CD8-positive, alpha-beta T cell (primary cell): ENCODE measurements at regions of chr3 and their contacts with region 1.

Region 1: DNA sequence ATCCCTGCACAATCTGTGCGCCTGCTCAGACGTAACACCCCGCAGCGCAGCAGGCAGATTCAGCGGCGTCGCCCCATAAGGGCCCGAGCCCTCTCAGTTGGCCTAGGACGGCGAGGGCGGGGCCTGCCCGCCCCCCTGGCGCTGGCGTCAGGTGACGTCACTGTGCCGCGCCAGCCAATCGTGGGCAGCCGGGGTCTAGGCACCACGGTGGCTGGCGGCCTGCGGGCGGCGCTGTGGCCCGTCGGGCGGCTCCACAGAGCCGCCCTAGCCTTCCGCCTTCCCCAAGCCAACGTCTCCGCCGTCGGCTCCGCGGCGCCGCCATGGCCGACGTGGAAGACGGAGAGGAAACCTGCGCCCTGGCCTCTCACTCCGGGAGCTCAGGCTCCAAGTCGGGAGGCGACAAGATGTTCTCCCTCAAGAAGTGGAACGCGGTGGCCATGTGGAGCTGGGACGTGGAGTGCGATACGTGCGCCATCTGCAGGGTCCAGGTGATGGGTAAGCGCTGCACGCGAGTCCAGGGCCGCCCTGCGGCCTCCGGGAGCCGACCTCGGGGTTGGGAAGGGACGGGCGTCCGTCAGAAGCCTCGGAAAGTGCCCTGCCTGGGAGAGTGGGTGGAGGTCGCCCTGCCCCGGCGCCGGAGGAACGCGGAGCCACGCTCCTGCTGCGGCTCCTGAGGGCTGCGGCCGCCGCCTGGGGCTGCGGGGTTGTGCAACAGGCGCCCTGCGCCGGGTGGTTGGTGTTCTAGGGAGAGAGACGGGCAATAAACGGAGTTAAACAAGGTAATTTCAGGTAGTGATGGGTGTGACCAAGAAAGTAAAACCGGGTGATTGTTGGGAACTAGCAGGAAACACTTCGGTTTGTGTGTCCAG is at the start of gene RNF7:
- DNase-seq: peak; percentile 95 to 99 (median 97)
- ATAC-seq: peak; percentile 94
- H3K4me3 ChIP-seq: peak within 1 kb of the TSS; percentile 82 to 95
- H3K4me3 Mint-ChIP-seq: peak within 1 kb of the TSS; percentile 97
- H3K27ac ChIP-seq: peak within 1 kb of the TSS; percentile 82 to 90
- H3K27ac Mint-ChIP-seq: peak within 1 kb of the TSS; percentile 98
- H3K4me1 ChIP-seq: peaks cover 31% of the 10 kb centered on the region
- H3K4me1 Mint-ChIP-seq: peaks cover 36% of the 10 kb centered on the region
- H3K27me3 ChIP-seq: no peaks in the 10 kb centered on the region
- H3K27me3 Mint-ChIP-seq: no peaks in the 10 kb centered on the region
- CTCF ChIP-seq: peak; percentile 70
- total RNA-seq, gene RNF7: 82.8 to 83.9 TPM

Region 2: DNA sequence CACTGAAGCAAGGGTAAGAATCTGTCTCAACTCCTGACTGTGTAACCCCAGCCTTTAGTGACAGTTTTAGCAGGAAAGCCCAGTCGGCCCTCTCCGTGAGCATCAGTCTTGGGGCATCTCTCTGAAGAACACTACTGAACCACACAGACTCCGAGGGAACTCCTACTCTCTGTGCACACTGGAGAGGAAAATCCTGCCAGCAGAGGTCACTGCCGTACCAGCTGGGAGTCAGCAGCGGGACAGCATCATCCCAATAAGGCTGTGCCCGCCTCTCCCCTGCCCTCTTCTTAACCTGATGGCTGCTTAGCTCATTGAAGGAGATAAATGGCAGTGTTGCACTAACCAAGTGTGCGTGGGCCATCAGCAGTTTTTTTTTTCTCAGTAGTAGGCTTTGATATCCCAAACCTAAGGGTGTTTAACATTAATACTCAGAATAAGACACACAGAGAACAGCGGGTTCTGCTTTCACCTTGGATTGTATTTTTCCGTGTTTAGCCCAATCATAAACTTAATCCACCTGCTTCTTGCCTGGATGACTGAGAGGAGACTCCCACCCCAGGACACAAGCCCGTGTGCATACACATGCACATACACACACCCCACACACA is 278.1 kb before region 1 on chr3:
- CTCF ChIA-PET with region 1: interaction called, 3 read pairs
- POLR2A ChIA-PET with region 1: no interaction called
- intact Hi-C with region 1: loop called (anchors 1 to 10 kb)
- DNase-seq: peak; percentile 77 to 92 (median 88)
- ATAC-seq: peak; percentile 100
- H3K4me3 ChIP-seq: no peak overlapping the region
- H3K4me3 Mint-ChIP-seq: no peak overlapping the region
- H3K27ac ChIP-seq: no peak overlapping the region
- H3K27ac Mint-ChIP-seq: no peak overlapping the region
- H3K4me1 ChIP-seq: no peaks in the 10 kb centered on the region
- H3K4me1 Mint-ChIP-seq: peaks cover 6% of the 10 kb centered on the region
- H3K27me3 ChIP-seq: no peaks in the 10 kb centered on the region
- H3K27me3 Mint-ChIP-seq: peaks cover 2% of the 10 kb centered on the region
- CTCF ChIP-seq: peak; percentile 93

Region 3: DNA sequence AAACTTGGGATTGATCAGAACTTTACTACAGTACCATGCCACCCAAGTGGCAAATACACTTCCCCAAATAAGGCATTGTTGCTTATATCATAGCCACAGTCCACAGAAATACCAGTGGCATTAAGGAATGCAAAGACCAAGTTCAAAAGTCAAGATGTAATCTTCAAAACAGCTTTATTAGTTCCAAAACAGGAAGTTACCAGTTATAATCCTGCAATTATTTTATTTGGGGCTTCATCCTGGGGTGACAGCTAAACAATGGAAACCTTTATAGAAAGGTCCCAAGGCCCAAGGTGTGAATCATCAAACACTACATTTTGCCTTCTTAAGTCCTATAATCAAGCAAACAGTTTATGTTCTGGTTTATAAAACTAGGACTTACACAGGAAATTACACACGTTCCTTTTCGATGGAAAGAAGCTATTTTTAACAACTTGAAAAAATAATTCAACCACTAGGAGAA is 30.5 kb before region 1 on chr3:
- CTCF ChIA-PET with region 1: no interaction called
- POLR2A ChIA-PET with region 1: no interaction called
- intact Hi-C with region 1: no loop called
- DNase-seq: no peak
- ATAC-seq: no peak
- H3K4me3 ChIP-seq: no peak overlapping the region
- H3K4me3 Mint-ChIP-seq: no peak overlapping the region
- H3K27ac ChIP-seq: no peak overlapping the region
- H3K27ac Mint-ChIP-seq: no peak overlapping the region
- H3K4me1 ChIP-seq: no peaks in the 10 kb centered on the region
- H3K4me1 Mint-ChIP-seq: peaks cover 8% of the 10 kb centered on the region
- H3K27me3 ChIP-seq: no peaks in the 10 kb centered on the region
- H3K27me3 Mint-ChIP-seq: no peaks in the 10 kb centered on the region
- CTCF ChIP-seq: no peak

Region 4: GRCh38 chr3:141796081-141796888 is 58.0 kb after region 1 on chr3:
- CTCF ChIA-PET with region 1: interaction called, 11 read pairs
- POLR2A ChIA-PET with region 1: interaction called, 26 read pairs
- intact Hi-C with region 1: loop called (anchors 1 to 2 kb)
- DNase-seq: peak; percentile 19 to 84 (median 68)
- ATAC-seq: peak; percentile 72
- H3K4me3 ChIP-seq: peak overlapping the region; percentile 42 to 48
- H3K4me3 Mint-ChIP-seq: peak overlapping the region; percentile 91
- H3K27ac ChIP-seq: peak overlapping the region; percentile 64 to 86
- H3K27ac Mint-ChIP-seq: peak overlapping the region; percentile 98
- H3K4me1 ChIP-seq: peaks cover 51% of the 10 kb centered on the region
- H3K4me1 Mint-ChIP-seq: peaks cover 58% of the 10 kb centered on the region
- H3K27me3 ChIP-seq: no peaks in the 10 kb centered on the region
- H3K27me3 Mint-ChIP-seq: no peaks in the 10 kb centered on the region
- CTCF ChIP-seq: no peak

Region 5: DNA sequence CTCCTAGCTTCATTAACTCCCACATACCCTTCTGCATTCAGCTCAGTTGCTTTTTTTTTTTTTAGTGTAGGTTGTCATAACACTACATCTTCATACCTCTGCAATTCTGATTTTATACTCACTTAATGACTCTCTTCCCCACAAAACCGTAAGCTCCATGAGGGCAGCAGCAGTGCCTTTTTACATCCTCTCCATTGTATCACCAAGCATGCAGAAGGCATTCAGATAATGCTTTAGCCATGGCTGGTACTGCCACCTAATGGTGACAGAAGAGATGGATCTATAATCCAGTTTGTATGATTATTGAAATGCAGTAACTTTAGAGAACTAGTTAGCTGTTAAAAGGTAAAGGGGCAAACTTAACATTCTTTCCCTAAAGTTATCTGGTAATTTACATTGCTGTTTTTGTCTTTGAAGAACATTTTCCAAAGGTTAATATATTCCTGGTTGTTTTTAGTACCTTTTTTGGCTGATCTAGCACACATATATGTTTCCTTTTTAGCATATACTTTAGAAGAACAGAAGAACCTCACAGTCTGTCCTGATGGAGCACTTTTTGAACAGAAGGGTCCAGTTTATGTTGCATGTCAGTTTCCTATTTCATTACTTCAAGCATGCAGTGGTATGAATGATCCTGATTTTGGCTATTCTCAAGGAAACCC is 175.0 kb after region 1 on chr3:
- CTCF ChIA-PET with region 1: interaction called, 25 read pairs
- POLR2A ChIA-PET with region 1: interaction called, 7 read pairs
- intact Hi-C with region 1: loop called (anchors 1 kb)
- DNase-seq: peak in 8 of 9 experiments; percentile 21 to 78 (median 47)
- ATAC-seq: peak; percentile 80
- H3K4me3 ChIP-seq: no peak overlapping the region
- H3K4me3 Mint-ChIP-seq: no peak overlapping the region
- H3K27ac ChIP-seq: peak overlapping the region in 1 of 2 experiments; percentile 23
- H3K27ac Mint-ChIP-seq: no peak overlapping the region
- H3K4me1 ChIP-seq: no peaks in the 10 kb centered on the region
- H3K4me1 Mint-ChIP-seq: no peaks in the 10 kb centered on the region
- H3K27me3 ChIP-seq: no peaks in the 10 kb centered on the region
- H3K27me3 Mint-ChIP-seq: no peaks in the 10 kb centered on the region
- CTCF ChIP-seq: peak; percentile 77

Region 6: GRCh38 chr3:142239421-142239820 is 501.2 kb after region 1 on chr3:
- CTCF ChIA-PET with region 1: no interaction called
- POLR2A ChIA-PET with region 1: no interaction called
- intact Hi-C with region 1: no loop called
- DNase-seq: no peak
- ATAC-seq: no peak
- H3K4me3 ChIP-seq: no peak overlapping the region
- H3K4me3 Mint-ChIP-seq: no peak overlapping the region
- H3K27ac ChIP-seq: no peak overlapping the region
- H3K27ac Mint-ChIP-seq: no peak overlapping the region
- H3K4me1 ChIP-seq: no peaks in the 10 kb centered on the region
- H3K4me1 Mint-ChIP-seq: no peaks in the 10 kb centered on the region
- H3K27me3 ChIP-seq: no peaks in the 10 kb centered on the region
- H3K27me3 Mint-ChIP-seq: peaks cover 15% of the 10 kb centered on the region
- CTCF ChIP-seq: no peak

Region 7: DNA sequence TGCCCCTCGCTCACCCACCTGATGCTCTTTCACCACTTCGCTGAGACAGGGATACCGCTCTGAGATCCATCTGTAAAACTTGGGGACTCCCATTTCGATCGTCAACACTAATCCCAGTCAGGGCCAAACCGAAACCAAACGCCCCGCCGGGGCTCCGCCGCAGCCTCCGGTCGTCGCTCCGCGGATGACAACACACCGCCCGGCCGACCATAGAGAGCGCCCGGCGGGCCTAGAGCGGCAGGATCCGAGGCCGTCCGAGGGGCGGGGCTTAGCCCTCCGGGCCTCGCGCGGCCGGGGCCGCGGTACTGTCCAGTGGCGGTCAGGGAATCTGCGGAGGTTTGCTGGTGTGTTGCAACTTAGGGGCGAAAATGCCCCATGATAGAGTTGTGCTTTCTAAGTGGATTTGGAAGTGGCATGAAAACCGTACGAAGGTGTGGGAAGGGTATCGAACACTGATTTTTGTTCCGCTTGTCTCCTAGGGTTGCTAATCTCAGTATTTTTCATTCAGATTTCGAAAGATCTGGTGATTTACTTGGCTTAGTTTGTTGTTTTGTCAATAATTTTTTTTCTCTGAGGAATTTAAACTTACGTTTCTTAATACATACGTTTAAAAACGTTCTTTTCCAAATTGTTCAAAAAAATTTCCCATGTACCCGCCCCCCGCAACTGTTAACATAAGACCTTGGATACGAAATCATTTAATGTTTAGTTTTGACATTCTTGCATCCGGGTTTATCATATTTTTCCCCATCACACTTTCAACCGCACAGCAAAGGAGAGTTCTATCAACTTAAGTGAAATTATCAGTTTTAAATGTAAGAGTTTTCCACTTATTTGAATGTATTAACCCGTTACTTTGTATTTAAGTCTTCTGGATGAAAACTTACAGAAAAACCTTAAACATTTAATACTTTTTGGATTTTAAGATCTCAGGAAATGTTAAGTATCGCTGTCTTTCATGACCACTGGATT is 709.9 kb after region 1 on chr3 and contains the start of gene XRN1:
- CTCF ChIA-PET with region 1: interaction called, 3 read pairs
- POLR2A ChIA-PET with region 1: no interaction called
- intact Hi-C with region 1: loop called in 1 of 2 experiments (anchors 2 kb)
- DNase-seq: peak; percentile 92 to 96 (median 95)
- ATAC-seq: peak; percentile 95
- H3K4me3 ChIP-seq: peak within 1 kb of the TSS; percentile 86 to 93
- H3K4me3 Mint-ChIP-seq: peak within 1 kb of the TSS; percentile 99
- H3K27ac ChIP-seq: peak within 1 kb of the TSS; percentile 97 to 99
- H3K27ac Mint-ChIP-seq: peak within 1 kb of the TSS; percentile 100
- H3K4me1 ChIP-seq: peaks cover 40% of the 10 kb centered on the region
- H3K4me1 Mint-ChIP-seq: peaks cover 43% of the 10 kb centered on the region
- H3K27me3 ChIP-seq: no peaks in the 10 kb centered on the region
- H3K27me3 Mint-ChIP-seq: no peaks in the 10 kb centered on the region
- CTCF ChIP-seq: no peak
- total RNA-seq, gene XRN1: 91.0 to 105 TPM